Caco-2 (cell line): ENCODE measurements at regions of chr11 and their contacts with region 1.

Region 1: GRCh38 chr11:34585735-34586487 is 35.0 kb upstream of the EHF start:
- DNase-seq: peak in 1 of 2 experiments; percentile 55
- H3K4me3 ChIP-seq: no peak overlapping the region
- H3K4me3 Mint-ChIP-seq: peak overlapping the region; percentile 39
- H3K27ac Mint-ChIP-seq: peak overlapping the region; percentile 61
- H3K4me1 ChIP-seq: peaks cover 28% of the 10 kb centered on the region
- H3K4me1 Mint-ChIP-seq: peaks cover 30% of the 10 kb centered on the region
- H3K27me3 ChIP-seq: 0 out of 2 replicates have a peak, but pooled peaks cover 1% of the 10 kb centered on the region
- H3K27me3 Mint-ChIP-seq: no peaks in the 10 kb centered on the region
- CTCF ChIP-seq: peak; percentile 37 to 81

Region 2: DNA sequence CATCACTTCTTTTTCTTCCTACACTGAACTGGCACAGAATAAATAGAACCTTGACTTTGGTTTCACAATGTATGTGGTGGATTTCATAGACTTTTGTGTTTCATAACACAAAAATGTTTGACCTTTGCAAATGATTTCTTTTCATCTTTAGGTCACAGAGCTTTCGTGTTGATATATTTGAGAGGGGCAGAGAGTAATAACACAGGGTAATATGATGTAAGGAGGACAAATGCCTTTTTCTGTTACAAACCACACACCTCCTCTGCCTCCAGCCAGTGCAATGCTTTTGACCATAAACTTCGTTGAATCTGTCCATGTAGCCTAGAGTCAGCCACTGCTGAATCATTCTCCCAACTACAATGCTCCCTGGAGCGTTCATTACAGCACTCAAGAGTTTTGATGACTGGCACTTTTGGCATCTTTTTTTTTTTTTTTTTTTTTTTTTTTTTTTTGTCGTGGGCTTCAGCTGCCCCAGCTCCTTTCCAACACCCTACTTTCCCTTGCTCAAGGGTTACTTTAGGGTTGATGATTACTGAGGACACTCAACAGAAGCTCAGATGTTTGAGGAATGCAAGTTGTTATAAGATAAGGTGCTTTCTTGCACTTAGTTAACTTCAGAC is 158.6 kb before region 1 on chr11:
- CTCF ChIA-PET with region 1: no interaction called
- POLR2A ChIA-PET with region 1: no interaction called
- intact Hi-C with region 1: no loop called
- DNase-seq: peak; percentile 49 to 52
- H3K4me3 ChIP-seq: no peak overlapping the region
- H3K4me3 Mint-ChIP-seq: peak overlapping the region; percentile 17
- H3K27ac Mint-ChIP-seq: peak overlapping the region; percentile 24
- H3K4me1 ChIP-seq: peaks cover 12% of the 10 kb centered on the region
- H3K4me1 Mint-ChIP-seq: peaks cover 14% of the 10 kb centered on the region
- H3K27me3 ChIP-seq: no peaks in the 10 kb centered on the region
- H3K27me3 Mint-ChIP-seq: peaks cover 2% of the 10 kb centered on the region
- CTCF ChIP-seq: no peak

Region 3: DNA sequence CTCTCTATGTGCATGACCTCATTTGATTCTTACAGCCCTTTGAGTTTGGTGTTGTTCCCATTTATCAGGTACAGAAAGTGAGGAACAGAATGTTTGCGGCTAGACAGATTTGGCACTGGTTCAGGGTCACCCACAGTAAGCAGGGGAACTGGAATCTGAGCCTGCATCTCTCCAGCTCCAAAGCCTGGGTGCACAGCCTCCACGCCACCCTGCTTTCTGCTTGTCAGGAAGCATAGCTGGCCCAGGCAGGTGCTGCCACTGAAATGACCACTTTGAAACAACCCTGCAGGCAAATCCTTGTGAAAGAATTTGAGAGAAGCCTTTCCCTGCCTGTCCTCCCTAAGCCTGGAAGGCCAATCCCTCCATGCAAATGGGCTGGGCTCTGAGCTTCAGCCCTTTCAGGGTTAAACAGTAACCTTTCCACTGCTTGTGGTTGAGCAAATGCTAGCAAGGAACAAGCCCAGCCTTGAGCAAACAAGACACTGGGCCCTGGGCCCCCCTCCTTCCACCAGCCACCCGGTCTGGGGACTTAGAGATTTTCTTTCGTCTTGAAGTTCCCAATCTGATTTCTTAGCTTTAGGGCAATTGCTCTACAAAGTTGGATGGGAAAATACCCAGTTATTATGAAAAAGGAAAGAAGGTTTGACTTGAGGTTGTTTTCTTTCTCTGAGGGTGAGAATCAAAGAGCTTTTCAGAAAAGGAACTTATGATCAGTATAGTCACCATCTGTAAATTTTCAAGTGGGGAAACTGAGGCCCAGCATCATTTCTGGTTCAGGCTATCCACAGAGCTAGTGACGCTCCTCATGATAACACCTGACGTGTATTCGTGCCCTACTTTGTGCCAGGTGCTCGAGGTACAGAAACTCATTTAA is 54.4 kb after region 1 on chr11:
- CTCF ChIA-PET with region 1: interaction called, 4 read pairs
- POLR2A ChIA-PET with region 1: no interaction called
- intact Hi-C with region 1: loop called (anchors 1 kb)
- DNase-seq: peak; percentile 91 to 96
- H3K4me3 ChIP-seq: no peak overlapping the region
- H3K4me3 Mint-ChIP-seq: peak overlapping the region; percentile 55
- H3K27ac Mint-ChIP-seq: peak overlapping the region; percentile 66
- H3K4me1 ChIP-seq: peaks cover 58% of the 10 kb centered on the region
- H3K4me1 Mint-ChIP-seq: peaks cover 62% of the 10 kb centered on the region
- H3K27me3 ChIP-seq: no peaks in the 10 kb centered on the region
- H3K27me3 Mint-ChIP-seq: no peaks in the 10 kb centered on the region
- CTCF ChIP-seq: no peak

Region 4: DNA sequence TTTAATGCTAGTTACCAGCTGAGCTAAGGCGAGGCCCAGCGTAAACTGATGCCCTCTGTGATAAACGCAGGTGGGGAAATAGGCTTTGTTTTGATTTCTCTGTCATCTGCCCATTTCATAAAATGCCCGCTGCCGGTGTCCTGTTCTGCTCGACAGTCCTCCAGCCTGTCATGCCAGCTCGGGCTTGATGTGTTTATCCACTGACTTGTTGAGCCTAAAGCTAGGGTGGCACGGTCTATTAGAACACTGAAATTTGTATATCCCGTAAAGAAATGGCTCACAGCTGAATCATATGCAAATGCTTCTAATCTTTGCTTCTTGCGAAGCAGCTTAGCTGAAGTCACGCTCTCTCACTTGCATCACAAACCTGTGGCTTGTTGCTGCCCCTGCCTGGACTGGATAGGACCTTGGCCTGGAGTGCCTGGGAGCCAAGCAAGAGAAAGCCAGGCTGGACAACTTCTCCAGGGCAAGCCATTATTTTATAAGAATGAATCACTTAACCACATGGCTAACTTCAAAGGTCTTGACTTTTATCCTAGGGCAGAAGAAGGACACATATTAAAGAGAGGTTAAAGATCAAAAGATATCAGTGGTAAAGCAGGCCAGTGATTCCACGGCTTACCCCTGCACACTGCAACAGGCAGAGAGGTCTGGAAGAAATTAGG is 68.0 kb after region 1 on chr11:
- CTCF ChIA-PET with region 1: interaction called, 3 read pairs
- POLR2A ChIA-PET with region 1: no interaction called
- intact Hi-C with region 1: loop called (anchors 1 kb)
- DNase-seq: peak; percentile 66 to 82
- H3K4me3 ChIP-seq: no peak overlapping the region
- H3K4me3 Mint-ChIP-seq: no peak overlapping the region
- H3K27ac Mint-ChIP-seq: peak overlapping the region; percentile 15
- H3K4me1 ChIP-seq: peaks cover 21% of the 10 kb centered on the region
- H3K4me1 Mint-ChIP-seq: peaks cover 26% of the 10 kb centered on the region
- H3K27me3 ChIP-seq: no peaks in the 10 kb centered on the region
- H3K27me3 Mint-ChIP-seq: no peaks in the 10 kb centered on the region
- CTCF ChIP-seq: peak in 1 of 2 experiments; percentile 40

Region 5: GRCh38 chr11:34840736-34841386 is 254.9 kb after region 1 on chr11:
- CTCF ChIA-PET with region 1: interaction called, 3 read pairs
- POLR2A ChIA-PET with region 1: no interaction called
- intact Hi-C with region 1: loop called (anchors 1 kb)
- DNase-seq: peak in 1 of 2 experiments; percentile 33
- H3K4me3 ChIP-seq: no peak overlapping the region
- H3K4me3 Mint-ChIP-seq: no peak overlapping the region
- H3K27ac Mint-ChIP-seq: no peak overlapping the region
- H3K4me1 ChIP-seq: no peaks in the 10 kb centered on the region
- H3K4me1 Mint-ChIP-seq: no peaks in the 10 kb centered on the region
- H3K27me3 ChIP-seq: no peaks in the 10 kb centered on the region
- H3K27me3 Mint-ChIP-seq: no peaks in the 10 kb centered on the region
- CTCF ChIP-seq: peak; percentile 23 to 29